ENCODE measurements at regions of chr14 and their contacts with region 1.

Region 1: GRCh38 chr14:89954070-89955028 is at the start of gene EFCAB11:
- DNase-seq: peak; percentile 96 to 98 (median 98)
- H3K4me3 ChIP-seq: peak within 1 kb of the TSS; percentile 62 to 90
- H3K4me3 Mint-ChIP-seq: peak within 1 kb of the TSS; percentile 95 to 98 (median 97)
- H3K27ac ChIP-seq: peak within 1 kb of the TSS; percentile 97
- H3K27ac Mint-ChIP-seq: peak within 1 kb of the TSS; percentile 88 to 97 (median 96)
- H3K4me1 ChIP-seq: peaks cover 30% of the 10 kb centered on the region
- H3K4me1 Mint-ChIP-seq: peaks cover 27 to 49% (median 38%) of the 10 kb centered on the region in 4 donors
- H3K27me3 ChIP-seq: no peaks in the 10 kb centered on the region
- H3K27me3 Mint-ChIP-seq: no peaks in the 10 kb centered on the region
- total RNA-seq, gene EFCAB11: 1.3 to 2.5 TPM

Region 2: DNA sequence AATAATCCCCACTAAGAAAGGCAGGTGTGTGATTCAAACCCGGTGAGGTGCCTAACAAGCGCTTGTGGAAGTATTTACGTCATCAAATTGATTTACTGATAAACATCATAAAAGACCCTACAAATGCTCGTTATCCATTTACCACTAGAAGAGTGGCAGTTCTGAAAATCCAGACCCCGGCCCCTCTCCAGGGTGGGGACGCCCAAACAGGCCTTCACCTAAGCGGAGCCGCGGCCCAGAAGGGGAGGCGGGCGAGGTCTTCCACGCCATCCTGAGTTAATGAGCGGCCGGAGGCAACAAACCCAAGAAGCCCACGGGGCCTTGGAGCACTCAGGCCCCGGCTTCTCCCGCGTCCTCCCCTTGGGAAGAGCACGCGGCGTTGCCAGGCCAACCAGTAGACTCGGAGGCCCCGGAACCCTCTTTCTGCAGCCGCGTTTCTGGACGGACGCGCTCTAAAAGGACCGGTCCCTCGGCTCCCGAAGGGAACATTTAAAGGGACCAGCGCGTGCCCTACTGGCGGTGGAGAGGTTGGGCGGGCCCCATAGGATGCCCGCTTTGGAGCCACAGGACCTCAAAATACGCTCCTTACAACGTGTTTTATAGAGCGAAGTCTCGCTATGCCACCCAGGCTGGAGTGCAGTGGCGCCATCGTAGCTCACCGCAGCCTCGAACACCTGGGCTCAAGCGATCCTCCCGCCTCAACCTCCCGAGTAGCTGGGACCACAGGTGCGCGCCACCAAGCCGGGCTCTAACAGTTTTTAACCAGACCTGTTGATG is 1403.1 kb before region 1 on chr14:
- CTCF ChIA-PET with region 1: no interaction called
- POLR2A ChIA-PET with region 1: no interaction called
- intact Hi-C with region 1: loop called (anchors 10 kb)
- DNase-seq: peak in 1 of 5 donors; percentile 19
- H3K4me3 ChIP-seq: peak overlapping the region in 1 of 2 donors; percentile 30
- H3K4me3 Mint-ChIP-seq: peak overlapping the region; percentile 45 to 77 (median 66)
- H3K27ac ChIP-seq: no peak overlapping the region
- H3K27ac Mint-ChIP-seq: no peak overlapping the region
- H3K4me1 ChIP-seq: peaks cover 15% of the 10 kb centered on the region
- H3K4me1 Mint-ChIP-seq: peaks cover 10 to 20% (median 16%) of the 10 kb centered on the region in 4 donors
- H3K27me3 ChIP-seq: peaks cover 48% of the 10 kb centered on the region
- H3K27me3 Mint-ChIP-seq: peaks cover 26 to 30% of the 10 kb centered on the region in 2 donors

Region 3: DNA sequence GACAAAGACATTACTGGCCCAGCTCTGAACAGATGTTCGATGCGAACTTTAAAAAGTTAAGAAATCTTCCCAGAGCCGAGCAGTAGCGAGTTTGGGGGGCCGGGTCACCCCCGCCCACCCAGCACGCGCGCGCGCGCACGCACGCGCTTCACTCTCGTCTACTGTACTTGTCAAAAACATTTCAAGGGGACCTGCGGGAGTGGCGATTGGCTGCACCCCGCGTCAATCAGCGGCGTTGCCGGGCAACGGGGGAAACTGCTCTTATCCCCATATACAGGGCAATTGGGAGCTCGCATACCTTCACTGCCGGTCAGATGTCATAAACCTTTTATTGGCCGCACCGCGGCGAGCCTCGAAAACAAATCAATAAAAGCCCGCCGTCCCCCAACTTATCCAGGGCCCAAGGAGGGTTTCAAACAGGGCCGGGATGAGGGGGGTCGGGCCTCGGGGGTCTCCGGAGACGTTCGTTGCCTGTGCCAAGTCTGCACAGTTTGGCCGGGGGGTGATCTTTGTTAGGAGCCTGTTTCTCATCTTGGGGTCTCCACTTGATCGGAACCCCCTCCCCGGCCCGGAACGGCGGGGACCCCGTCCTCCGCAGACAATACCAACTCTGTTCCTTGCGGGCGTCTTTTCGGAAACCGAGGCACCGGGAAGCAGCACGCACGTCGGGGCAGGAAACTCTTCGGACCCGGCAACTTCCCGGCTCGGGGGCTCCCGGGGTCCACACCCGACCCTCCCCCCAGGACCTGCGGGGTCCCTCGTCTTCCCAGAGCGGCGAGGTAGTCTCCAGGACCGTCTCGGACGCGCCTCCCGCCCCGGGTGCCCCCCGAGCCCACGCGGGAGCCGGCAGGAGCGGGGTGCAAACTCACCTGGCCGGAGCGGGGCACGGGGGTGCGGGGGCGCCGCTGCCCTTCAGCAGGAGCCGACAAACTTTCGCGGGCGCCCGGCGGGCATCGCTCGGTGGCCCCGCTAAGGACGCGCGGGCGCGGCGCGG is 538.0 kb before region 1 on chr14:
- CTCF ChIA-PET with region 1: interaction called, 3 read pairs
- POLR2A ChIA-PET with region 1: interaction called, 3 read pairs
- intact Hi-C with region 1: loop called (anchors 1 kb)
- DNase-seq: peak; percentile 96 to 99 (median 97)
- H3K4me3 ChIP-seq: peak overlapping the region; percentile 86
- H3K4me3 Mint-ChIP-seq: peak overlapping the region; percentile 88 to 98 (median 94)
- H3K27ac ChIP-seq: peak overlapping the region; percentile 65
- H3K27ac Mint-ChIP-seq: peak overlapping the region; percentile 93 to 99 (median 95)
- H3K4me1 ChIP-seq: peaks cover 22% of the 10 kb centered on the region
- H3K4me1 Mint-ChIP-seq: peaks cover 22 to 60% (median 41%) of the 10 kb centered on the region in 4 donors
- H3K27me3 ChIP-seq: no peaks in the 10 kb centered on the region
- H3K27me3 Mint-ChIP-seq: no peaks in the 10 kb centered on the region

Region 4: DNA sequence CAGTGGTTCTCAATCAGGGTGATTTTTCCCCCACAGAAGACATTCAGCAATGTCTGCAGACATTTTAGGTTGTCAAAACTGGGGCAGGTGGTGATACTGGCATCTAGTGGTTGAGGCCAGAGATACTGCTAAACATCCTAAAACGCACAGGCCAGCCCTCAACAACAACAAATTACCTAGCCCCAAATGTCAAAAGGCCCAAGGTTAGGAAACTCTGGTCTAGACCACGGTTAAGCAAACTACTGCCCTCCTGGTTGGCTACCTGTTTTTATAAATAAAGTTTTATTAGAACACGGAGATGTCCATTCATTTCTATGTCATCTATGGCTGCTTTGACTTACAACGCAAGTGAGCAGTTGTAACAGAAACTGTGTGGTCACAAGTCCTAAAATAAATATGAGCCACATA is 186.5 kb before region 1 on chr14:
- CTCF ChIA-PET with region 1: no interaction called
- POLR2A ChIA-PET with region 1: no interaction called
- intact Hi-C with region 1: no loop called
- DNase-seq: peak; percentile 64 to 69 (median 67)
- H3K4me3 ChIP-seq: no peak overlapping the region
- H3K4me3 Mint-ChIP-seq: peak overlapping the region in 4 of 8 donors; percentile 51 to 62 (median 60)
- H3K27ac ChIP-seq: no peak overlapping the region
- H3K27ac Mint-ChIP-seq: peak overlapping the region in 2 of 7 donors; percentile 2 to 56
- H3K4me1 ChIP-seq: peaks cover 9% of the 10 kb centered on the region
- H3K4me1 Mint-ChIP-seq: peaks cover 13 to 32% (median 25%) of the 10 kb centered on the region in 4 donors
- H3K27me3 ChIP-seq: no peaks in the 10 kb centered on the region
- H3K27me3 Mint-ChIP-seq: peaks cover 0 to 2% of the 10 kb centered on the region in 2 donors

Region 5: DNA sequence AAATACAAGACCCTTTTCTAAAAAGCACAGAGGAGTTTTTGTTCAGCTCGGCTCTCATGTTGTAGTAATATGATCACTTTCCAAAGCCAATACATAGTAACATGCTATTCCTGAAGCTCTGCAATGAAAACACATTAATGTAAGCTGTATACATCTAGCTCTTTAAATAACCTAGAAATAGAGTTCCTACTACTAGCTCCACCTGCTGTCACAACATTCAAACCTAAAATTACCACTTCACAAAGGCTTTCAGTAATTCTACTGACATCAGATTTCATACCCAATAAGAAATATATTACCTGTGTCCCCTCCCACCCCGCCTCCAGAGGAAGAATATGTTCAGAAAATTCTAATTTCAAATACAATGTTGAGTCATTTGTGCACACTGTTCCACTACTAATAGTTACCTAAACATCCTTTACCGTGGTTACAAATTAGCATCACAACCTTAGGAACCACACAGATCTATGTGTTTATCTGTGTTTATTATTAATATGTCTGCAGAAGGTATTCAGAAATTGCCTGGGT is 17.6 kb before region 1 on chr14:
- CTCF ChIA-PET with region 1: interaction called, 29 read pairs
- POLR2A ChIA-PET with region 1: interaction called, 5 read pairs
- intact Hi-C with region 1: no loop called
- DNase-seq: no peak
- H3K4me3 ChIP-seq: no peak overlapping the region
- H3K4me3 Mint-ChIP-seq: no peak overlapping the region
- H3K27ac ChIP-seq: no peak overlapping the region
- H3K27ac Mint-ChIP-seq: no peak overlapping the region
- H3K4me1 ChIP-seq: no peaks in the 10 kb centered on the region
- H3K4me1 Mint-ChIP-seq: peaks cover 0 to 1% (median 0%) of the 10 kb centered on the region in 4 donors
- H3K27me3 ChIP-seq: no peaks in the 10 kb centered on the region
- H3K27me3 Mint-ChIP-seq: no peaks in the 10 kb centered on the region

Region 6: GRCh38 chr14:90256354-90257131 is 302.2 kb after region 1 on chr14 and contains the start of gene PSMC1:
- CTCF ChIA-PET with region 1: no interaction called
- POLR2A ChIA-PET with region 1: interaction called, 13 read pairs
- intact Hi-C with region 1: loop called (anchors 1 kb)
- DNase-seq: peak; percentile 83 to 89 (median 85)
- H3K4me3 ChIP-seq: peak within 1 kb of the TSS; percentile 77 to 92
- H3K4me3 Mint-ChIP-seq: peak within 1 kb of the TSS; percentile 97 to 99 (median 98)
- H3K27ac ChIP-seq: peak within 1 kb of the TSS; percentile 82
- H3K27ac Mint-ChIP-seq: peak within 1 kb of the TSS; percentile 94 to 99 (median 97)
- H3K4me1 ChIP-seq: peaks cover 23% of the 10 kb centered on the region
- H3K4me1 Mint-ChIP-seq: peaks cover 23 to 40% (median 32%) of the 10 kb centered on the region in 4 donors
- H3K27me3 ChIP-seq: no peaks in the 10 kb centered on the region
- H3K27me3 Mint-ChIP-seq: peaks cover 3 to 11% of the 10 kb centered on the region in 2 donors
- total RNA-seq, gene PSMC1: 42.1 to 52.5 TPM

Region 7: DNA sequence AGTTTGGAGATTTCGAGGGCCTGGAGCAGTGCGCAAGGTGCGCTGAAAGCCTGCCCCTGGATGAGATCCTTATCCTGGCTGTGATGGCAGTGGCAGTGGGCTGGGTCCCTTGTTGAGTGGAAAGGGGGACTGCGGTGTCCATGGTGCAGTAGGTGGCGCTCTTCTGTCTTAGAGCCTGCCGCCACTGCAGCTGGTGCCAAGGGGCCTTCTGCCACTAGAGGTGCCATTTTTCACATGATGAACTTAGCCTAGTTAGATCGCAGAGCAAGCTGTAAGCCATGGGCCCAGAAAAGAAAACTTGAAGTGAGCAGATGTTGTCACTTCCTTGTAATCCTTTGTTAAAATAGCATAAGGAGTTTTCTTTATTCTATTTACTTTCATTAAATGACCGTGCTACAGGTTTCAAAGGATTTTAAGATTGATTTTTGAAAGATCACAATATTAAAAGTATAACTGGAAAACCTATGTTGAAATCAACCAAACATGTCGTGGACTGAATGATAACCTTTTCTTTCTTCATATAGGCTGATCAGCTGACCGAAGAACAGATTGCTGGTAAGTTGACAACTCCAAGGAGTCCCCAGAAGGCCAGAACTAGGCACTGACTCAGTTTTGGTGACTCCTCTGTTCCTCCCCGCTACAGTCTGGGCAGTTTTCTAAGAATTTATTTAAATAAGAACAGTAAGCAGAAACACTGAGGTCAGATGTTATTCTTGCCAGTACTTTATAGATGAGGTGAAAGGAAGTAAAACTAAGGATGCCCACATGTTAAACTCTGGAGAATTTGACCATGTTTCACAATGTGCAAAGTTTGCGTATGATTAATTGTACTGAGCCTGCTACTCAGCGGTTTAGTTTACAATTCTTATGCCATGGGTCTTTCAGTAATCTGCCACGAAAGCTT is 445.4 kb after region 1 on chr14:
- CTCF ChIA-PET with region 1: no interaction called
- POLR2A ChIA-PET with region 1: interaction called, 5 read pairs
- intact Hi-C with region 1: loop called (anchors 2 kb)
- DNase-seq: peak; percentile 83 to 91 (median 87)
- H3K4me3 ChIP-seq: peak overlapping the region; percentile 71 to 88
- H3K4me3 Mint-ChIP-seq: peak overlapping the region; percentile 95 to 99 (median 98)
- H3K27ac ChIP-seq: peak overlapping the region; percentile 87
- H3K27ac Mint-ChIP-seq: peak overlapping the region; percentile 98 to 99 (median 99)
- H3K4me1 ChIP-seq: peaks cover 59% of the 10 kb centered on the region
- H3K4me1 Mint-ChIP-seq: peaks cover 34 to 70% (median 53%) of the 10 kb centered on the region in 4 donors
- H3K27me3 ChIP-seq: no peaks in the 10 kb centered on the region
- H3K27me3 Mint-ChIP-seq: peaks cover 0 to 5% of the 10 kb centered on the region in 2 donors

Measured in CD4-positive, alpha-beta memory T cell (primary cell).